ENCODE measurements at regions of chr6 and their contacts with region 1.

Region 1: GRCh38 chr6:34414999-34415858 is 10.6 kb downstream of the RPS10 start:
- DNase-seq: no peak
- ATAC-seq: peak; percentile 92

Region 2: DNA sequence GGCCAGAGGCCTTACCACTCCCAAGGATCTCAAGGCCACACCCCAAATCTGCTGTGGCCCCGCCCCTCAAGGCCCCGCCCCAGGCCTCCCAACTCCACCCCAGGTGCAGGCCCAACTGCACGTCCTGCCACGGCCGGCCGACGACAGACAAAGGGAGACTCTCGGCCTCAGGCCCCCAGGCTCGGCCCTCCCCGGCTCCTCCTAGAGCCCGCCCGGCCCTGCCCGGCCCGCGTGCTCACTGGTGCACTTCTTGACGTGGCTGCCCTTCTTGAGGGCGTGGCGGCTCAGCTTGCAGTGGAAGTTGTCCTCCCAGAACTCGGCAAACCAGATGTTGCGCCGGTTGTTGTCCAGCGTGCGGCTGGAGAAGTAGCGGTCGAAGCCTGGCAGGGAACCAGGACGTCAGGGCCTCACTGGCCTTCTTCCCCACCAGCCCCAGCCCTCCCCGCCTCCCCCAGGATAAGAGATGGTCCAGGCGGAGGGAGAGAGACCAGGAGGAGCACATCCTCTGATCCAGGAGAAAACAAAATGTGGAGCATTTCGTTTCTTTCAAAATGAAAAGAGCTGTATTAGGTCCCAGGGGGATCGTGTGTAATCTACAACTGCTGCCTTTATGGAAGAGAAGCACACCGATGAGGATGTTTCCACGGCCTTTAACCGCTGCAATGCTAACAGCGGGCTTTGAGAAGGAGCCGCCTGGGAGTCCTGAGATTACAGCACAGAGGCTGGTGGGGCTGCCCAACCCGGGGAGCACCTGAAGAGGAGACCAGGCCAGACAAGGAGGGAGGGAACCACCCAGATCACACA is 358.7 kb before region 1 on chr6:
- intact Hi-C with region 1: no loop called
- DNase-seq: peak; percentile 82
- ATAC-seq: peak; percentile 85

Region 3: GRCh38 chr6:34196126-34196830 is 219.0 kb before region 1 on chr6:
- intact Hi-C with region 1: loop called (anchors 10 kb)
- DNase-seq: peak; percentile 95
- ATAC-seq: peak; percentile 100

Measured in left ventricle myocardium superior (tissue), 1 donor.